Activated CD4-positive, alpha-beta memory T cell treated with anti-CD3 and anti-CD28 coated beads for 36 hours (primary cell): ENCODE measurements at regions of chr1 and their contacts with region 1.

Region 1: DNA sequence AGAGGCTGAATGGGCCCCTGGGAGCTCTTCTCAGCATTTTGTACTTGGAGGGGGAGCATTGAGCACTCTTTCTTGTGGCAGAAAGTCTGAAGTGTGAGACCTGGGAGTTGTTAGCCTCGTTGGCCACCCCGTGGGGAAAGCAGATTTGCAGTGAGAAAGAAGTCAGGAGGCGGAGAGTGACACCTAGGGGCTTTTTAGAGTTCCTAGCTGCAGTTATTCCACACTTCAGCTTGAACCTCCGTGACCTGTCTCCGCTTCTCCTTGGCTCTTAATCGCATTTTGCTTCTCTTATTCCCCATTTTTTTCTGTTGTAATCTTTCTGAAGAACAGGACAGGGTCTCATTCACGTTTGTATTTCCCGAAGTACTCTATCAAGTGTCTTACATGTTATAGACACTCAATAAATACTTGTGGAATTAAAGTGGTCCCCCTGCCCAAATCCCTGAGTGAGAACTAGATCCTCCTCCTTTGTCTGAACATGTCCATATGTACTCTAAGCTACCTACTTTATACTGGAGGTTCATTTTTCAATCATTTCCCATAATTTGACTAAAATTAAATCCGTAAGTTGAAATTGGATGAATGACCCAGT is 14.5 kb upstream of the C1orf141 start:
- DNase-seq: peak; percentile 77
- H3K4me3 Mint-ChIP-seq: no peak overlapping the region
- H3K27ac Mint-ChIP-seq: no peak overlapping the region
- H3K4me1 Mint-ChIP-seq: peaks cover 28% of the 10 kb centered on the region
- H3K27me3 Mint-ChIP-seq: peaks cover 10% of the 10 kb centered on the region

Region 2: DNA sequence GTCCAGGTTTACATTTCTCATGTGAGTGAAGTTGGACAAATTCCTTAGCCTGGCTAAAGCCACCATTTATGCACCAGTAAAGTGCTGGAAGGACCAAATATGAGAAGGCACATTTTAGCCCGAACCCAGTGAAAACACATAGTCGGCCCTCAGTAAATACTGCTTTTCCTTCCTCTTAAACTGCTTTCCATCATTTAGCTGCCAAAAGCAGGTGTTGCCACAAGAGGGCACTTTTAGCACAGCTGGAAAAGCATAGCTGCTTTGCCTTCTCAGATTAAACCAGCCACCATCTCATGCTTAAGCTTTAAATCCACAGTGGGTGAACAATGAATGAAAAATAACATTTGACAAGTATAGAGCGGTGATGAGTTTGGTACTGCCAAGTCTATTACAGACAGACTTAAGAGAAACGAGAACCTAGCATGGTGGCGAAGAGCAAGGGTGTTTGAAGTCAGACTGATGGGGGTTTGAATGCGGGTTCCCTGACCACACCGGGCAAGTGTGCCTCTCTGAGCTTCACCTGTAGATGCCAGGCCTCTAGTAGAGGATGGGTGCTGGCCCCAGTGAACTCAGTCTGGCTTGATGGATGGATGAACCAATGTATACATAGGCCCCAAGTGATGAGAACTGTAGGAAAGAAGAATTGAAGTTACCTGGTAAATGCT is 153.1 kb before region 1 on chr1:
- CTCF ChIA-PET with region 1: interaction called, 60 read pairs
- POLR2A ChIA-PET with region 1: interaction called, 4 read pairs
- intact Hi-C with region 1: loop called (anchors 1 kb)
- DNase-seq: peak; percentile 78
- H3K4me3 Mint-ChIP-seq: no peak overlapping the region
- H3K27ac Mint-ChIP-seq: peak overlapping the region; percentile 25
- H3K4me1 Mint-ChIP-seq: peaks cover 16% of the 10 kb centered on the region
- H3K27me3 Mint-ChIP-seq: no peaks in the 10 kb centered on the region

Region 3: DNA sequence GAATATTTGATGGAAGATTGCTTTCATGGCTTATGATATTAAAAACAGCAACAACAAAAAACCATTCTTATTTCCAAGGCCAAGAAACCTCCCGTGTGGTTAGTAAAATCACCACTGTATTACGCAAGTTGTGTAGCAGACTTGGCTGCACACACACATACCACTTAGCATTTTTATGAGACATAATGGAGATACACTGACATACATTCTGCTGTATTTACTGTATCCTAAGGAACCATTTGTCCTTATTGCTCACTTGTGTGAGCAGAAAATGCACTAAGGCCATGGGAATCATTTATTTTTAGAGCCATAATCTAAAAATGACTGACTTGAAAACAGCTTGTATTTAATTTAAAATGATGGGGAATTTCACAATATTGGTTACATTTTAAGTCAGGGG is 13.9 kb before region 1 on chr1:
- CTCF ChIA-PET with region 1: interaction called, 14 read pairs
- POLR2A ChIA-PET with region 1: no interaction called
- intact Hi-C with region 1: no loop called
- DNase-seq: no peak
- H3K4me3 Mint-ChIP-seq: no peak overlapping the region
- H3K27ac Mint-ChIP-seq: no peak overlapping the region
- H3K4me1 Mint-ChIP-seq: peaks cover 8% of the 10 kb centered on the region
- H3K27me3 Mint-ChIP-seq: peaks cover 7% of the 10 kb centered on the region